HEK293 (cell line): ENCODE measurements at regions of chr10 and their contacts with region 1.

Region 1: GRCh38 chr10:99435986-99436638 is 5.7 kb upstream of the GOT1 start:
- H3K4me3 ChIP-seq: no peak overlapping the region
- H3K27ac ChIP-seq: no peak overlapping the region
- H3K4me1 ChIP-seq: 0 out of 2 replicates have a peak, but pooled peaks cover 3% of the 10 kb centered on the region
- CTCF ChIP-seq: no peak

Region 2: DNA sequence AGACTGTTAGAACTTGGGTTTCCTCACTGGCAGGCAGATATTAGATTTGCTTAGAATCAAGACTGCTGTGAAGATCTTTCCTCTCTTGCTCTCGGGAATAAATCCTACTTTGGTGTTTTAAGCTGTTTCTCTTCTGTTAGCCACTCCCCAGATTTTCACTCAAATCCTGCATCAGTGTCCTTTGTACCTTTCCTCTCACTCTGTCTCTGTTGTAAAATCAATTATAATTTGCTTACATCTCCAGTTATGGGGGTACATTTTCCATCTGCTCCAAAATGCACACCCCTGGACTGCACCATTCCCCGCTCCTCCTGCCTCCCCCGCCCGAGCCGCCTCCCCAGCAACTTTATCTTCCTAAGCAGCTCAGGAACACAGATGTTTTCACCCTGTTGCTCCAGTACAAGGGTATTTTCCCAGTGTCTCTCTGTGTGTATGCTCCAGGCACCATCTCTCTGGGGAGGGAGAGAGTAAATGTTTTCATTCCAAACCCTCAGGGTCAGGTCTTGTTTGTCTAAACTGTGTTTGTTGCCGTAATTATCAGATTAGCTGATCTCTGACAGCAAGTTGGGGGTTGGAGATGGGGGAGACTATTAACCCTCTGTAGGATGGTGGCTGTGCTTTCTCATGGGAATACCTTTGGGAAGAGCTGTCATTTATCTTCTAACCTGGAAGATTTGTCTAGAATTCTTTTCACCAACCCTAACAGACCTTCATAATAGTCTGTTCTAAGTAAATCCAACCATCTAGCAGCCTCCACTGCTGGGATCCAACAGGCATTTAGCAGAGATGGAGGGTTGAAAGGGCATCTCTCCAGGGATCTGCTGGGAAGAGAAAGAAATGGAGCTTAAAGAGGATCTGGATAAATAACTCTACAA is 14.7 kb after region 1 on chr10:
- CTCF ChIA-PET with region 1: interaction called, 39 read pairs
- POLR2A ChIA-PET with region 1: no interaction called
- H3K4me3 ChIP-seq: no peak overlapping the region
- H3K27ac ChIP-seq: peak overlapping the region; percentile 51
- H3K4me1 ChIP-seq: peaks cover 28% of the 10 kb centered on the region
- CTCF ChIP-seq: no peak

Region 3: DNA sequence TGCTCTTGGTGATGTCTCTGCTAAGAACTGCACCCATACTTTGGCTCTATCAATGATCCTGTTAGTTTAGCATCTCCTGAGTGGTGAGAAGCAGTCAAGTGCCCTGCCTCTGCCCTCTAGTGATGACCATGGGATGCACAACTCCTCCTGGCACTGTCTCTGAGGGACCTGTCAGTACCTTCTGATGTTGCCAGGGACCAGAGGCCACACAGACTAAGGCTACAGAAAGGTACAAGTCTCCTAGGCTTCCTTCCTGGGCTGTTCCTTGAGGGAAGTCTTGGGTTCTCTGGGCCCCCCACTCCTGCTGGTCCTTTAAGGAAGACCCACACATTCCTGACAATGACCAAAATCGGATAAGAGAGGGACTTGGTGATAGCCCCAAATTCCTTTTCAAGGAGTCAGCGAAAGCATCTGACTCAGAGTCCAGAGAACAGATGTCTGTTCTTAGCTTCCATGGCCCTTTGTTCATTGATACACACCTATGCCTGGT is 112.0 kb after region 1 on chr10:
- CTCF ChIA-PET with region 1: interaction called, 62 read pairs
- POLR2A ChIA-PET with region 1: no interaction called
- H3K4me3 ChIP-seq: no peak overlapping the region
- H3K27ac ChIP-seq: no peak overlapping the region
- H3K4me1 ChIP-seq: peaks cover 14% of the 10 kb centered on the region
- CTCF ChIP-seq: peak; percentile 62; the same call in 1 of the 2 replicates

Region 4: DNA sequence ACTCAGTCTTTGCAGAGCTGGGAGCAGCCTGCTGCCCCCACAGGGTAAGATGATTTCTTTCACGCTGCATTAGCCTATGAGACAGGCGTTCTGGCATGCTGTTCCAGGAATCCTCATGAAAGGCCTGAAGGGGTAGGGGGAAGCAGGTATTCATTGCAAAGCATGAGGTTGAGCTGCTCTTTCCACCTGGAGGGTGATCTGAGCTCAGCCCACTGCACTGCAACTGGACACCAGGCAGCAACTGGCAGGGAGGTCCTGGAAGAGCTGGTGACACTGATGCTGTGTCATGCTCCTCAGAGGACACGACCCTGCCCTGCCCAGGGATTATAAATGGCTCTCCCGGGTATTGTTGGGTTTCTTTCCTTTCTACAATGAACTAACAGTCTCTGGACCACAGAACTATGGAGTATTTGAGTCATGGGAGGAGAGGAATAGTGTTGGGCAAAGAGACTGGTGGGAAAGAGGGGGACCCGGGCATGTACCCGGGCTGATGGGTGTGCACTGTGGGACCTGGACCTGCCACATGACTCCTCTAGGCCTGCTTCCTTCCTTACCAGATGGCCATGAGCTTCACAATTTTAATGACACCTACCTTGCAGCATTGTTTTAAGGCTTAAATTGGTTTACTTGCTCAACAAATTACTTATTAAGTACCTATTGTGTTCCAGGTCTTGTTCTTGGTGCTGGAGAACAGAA is 159.8 kb after region 1 on chr10:
- CTCF ChIA-PET with region 1: interaction called, 11 read pairs
- POLR2A ChIA-PET with region 1: no interaction called
- H3K4me3 ChIP-seq: no peak overlapping the region
- H3K27ac ChIP-seq: no peak overlapping the region
- H3K4me1 ChIP-seq: no peaks in the 10 kb centered on the region
- CTCF ChIP-seq: no peak

Region 5: DNA sequence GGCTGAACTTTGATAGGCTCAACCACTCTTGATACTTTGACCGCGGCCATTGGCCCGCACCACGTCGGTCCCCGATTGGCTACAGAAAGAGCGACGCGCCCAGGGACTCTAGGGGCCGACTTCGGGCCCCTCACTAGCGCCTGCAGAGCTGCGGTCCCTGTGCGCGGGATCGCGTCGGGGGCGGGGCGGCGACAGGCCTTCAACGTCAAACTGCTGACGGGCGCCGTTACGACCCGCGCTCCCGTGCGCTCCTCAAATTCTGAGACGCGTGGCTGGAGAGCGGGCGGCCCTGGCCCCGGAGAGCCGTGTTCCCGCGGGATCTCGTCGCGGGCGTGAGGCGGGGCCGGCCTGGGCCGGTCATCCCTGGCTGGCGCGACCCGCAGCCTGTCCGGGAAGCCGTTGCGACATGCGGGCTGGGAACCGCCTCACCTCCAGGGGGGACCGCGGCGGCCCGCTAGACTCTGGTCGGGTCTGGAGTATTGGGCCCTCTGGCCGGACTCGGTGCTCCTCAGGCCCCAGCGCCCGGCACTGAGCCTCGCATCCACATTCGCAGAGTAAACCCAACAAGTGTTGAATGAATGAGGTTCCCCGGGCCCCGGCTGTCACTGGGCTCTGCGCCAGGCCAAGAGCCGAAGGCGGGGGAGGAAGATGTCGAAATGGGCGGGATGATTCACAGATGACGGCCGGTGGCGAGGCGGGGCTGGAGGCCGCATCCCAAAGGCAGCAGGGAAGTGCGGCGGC is 184.8 kb after region 1 on chr10:
- CTCF ChIA-PET with region 1: interaction called, 104 read pairs
- POLR2A ChIA-PET with region 1: interaction called, 20 read pairs
- H3K4me3 ChIP-seq: peak overlapping the region; percentile 59
- H3K27ac ChIP-seq: peak overlapping the region; percentile 99
- H3K4me1 ChIP-seq: 0 out of 2 replicates have a peak, but pooled peaks cover 7% of the 10 kb centered on the region
- CTCF ChIP-seq: peak; percentile 60; the same call in 1 of the 2 replicates